ENCODE measurements at regions of chr17 and their contacts with region 1.

Region 1: GRCh38 chr17:49045376-49045775 is 48.2 kb downstream of the IGF2BP1 start:
- H3K4me3 ChIP-seq: no peak overlapping the region
- H3K27ac ChIP-seq: no peak overlapping the region; the same call in 1 of the 2 replicates
- H3K4me1 ChIP-seq: no peaks in the 10 kb centered on the region
- CTCF ChIP-seq: no peak

Region 2: GRCh38 chr17:48954300-48954755 is 91.0 kb before region 1 on chr17:
- CTCF ChIA-PET with region 1: interaction called, 10 read pairs
- POLR2A ChIA-PET with region 1: no interaction called
- H3K4me3 ChIP-seq: no peak overlapping the region
- H3K27ac ChIP-seq: no peak overlapping the region
- H3K4me1 ChIP-seq: no peaks in the 10 kb centered on the region; the same call in 1 of the 2 replicates
- CTCF ChIP-seq: peak; percentile 73